ENCODE measurements at regions of chr10 and their contacts with region 1.

Region 1: DNA sequence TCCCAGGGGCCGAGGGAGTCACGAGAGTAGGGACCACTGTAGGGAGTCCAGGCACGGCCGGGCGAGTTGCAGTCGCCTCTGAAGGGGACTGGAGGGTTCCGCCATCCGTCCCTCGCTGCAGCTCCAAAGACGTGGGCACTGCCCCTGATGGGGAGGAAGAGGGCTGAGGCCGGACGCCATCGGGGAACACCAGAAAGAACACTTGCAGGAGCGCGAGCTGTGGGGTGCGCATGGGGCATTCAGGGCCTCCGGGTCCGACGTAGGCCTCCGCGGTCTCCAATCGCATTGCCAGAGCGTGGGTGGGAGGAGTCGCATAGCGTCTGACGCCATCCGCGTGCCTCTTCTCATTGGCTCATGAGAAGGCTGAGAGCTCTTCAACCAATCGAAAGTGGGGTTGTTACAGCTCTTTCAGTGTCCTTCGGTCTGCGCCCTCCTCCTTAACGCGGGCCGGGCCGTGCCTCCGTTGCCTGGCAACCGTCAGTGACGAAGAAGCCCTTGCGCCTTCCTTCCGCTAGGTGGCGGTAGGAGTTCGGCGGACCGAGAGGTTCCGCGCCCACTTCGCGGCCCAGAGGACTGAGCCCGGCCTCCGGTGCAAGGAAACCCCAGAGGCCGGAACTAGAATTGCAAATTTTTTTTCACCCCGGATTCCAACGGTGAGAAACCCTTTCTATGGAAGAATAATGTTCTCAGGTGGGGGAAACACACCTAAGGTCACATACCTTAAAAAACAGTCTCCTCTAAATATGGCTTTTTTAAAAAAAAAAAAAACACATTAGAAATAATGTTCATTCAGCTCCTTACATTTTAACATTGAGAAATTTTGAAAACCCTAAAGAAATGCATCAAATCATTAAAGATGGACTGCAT is at the start of gene TCTN3:
- DNase-seq: peak; percentile 97
- H3K4me3 ChIP-seq: peak within 1 kb of the TSS; percentile 72 to 89 (median 84)
- H3K27ac ChIP-seq: peak within 1 kb of the TSS; percentile 86 to 94 (median 88)
- H3K4me1 ChIP-seq: peaks cover 9 to 27% (median 11%) of the 10 kb centered on the region in 4 donors
- H3K27me3 ChIP-seq: no peaks in the 10 kb centered on the region
- CTCF ChIP-seq: peak; percentile 98 to 100 (median 99)
- EP300 ChIP-seq: no peak
- POLR2A ChIP-seq: peak; percentile 85
- total RNA-seq, gene TCTN3: 11.2 to 25.5 (median 20.7) TPM

Region 2: DNA sequence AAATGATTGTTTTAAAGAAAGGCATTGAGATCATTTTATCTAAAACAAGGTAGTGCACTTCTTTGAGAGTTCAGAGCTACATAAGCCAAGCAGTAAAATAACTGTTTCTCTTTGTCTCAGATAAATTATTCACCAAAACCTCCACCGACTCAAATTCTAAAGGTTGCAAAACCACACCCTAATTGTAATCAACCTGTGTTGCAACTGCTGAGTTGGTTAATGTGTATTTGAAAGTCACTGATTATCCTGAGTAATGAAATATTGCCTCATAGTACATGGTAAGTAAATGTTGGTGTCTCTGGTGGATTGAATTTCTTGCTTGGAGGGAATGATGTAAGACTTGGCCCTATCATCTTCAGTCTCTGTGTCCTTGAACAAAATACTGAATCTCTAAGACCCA is 791.3 kb before region 1 on chr10:
- in situ Hi-C with region 1: no loop called
- intact Hi-C with region 1: no loop called
- DNase-seq: no peak
- H3K4me3 ChIP-seq: no peak overlapping the region
- H3K27ac ChIP-seq: peak overlapping the region in 3 of 4 donors; percentile 32 to 52 (median 37)
- H3K4me1 ChIP-seq: peaks cover 0 to 5% (median 0%) of the 10 kb centered on the region in 4 donors
- H3K27me3 ChIP-seq: no peaks in the 10 kb centered on the region
- CTCF ChIP-seq: no peak
- EP300 ChIP-seq: no peak
- POLR2A ChIP-seq: no peak

Region 3: GRCh38 chr10:95706986-95707385 is 13.1 kb after region 1 on chr10:
- in situ Hi-C with region 1: no loop called
- intact Hi-C with region 1: no loop called
- DNase-seq: no peak
- H3K4me3 ChIP-seq: no peak overlapping the region
- H3K27ac ChIP-seq: no peak overlapping the region
- H3K4me1 ChIP-seq: no peaks in the 10 kb centered on the region
- H3K27me3 ChIP-seq: no peaks in the 10 kb centered on the region
- CTCF ChIP-seq: no peak
- EP300 ChIP-seq: no peak
- POLR2A ChIP-seq: no peak

Region 4: DNA sequence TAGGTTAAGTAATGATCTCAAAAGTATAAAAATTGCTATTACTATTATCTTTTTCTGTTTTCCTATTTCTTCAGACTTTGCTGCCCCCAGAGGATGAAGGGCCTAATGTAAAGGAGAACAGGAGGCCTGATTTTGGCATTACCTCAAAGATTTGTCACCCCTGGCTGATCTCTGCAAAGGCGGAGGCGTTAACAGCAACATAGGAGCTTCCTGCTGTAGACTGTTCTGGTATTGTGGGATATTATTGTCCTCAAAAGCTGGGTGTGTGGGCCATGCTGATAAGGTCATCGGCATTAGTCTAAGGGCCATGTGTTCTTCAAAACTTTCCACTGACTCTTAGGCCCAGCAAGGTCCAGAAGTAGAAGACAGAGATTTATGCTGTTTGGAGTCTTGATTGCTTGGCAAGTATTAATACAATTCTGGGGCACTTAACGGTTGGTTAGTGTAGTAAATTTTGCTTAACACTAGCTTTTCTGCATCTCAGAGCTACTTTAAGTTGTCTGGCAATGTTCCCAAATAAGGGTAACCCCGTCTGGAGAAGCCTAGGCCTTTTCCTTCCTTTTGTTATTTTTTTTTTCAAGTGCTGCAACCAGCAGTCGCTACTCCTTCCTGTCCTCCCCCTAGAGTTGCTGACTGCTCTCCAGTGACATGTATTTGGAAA is 48.0 kb after region 1 on chr10:
- in situ Hi-C with region 1: no loop called
- intact Hi-C with region 1: no loop called
- DNase-seq: peak; percentile 19
- H3K4me3 ChIP-seq: no peak overlapping the region
- H3K27ac ChIP-seq: peak overlapping the region; percentile 58 to 72 (median 70)
- H3K4me1 ChIP-seq: peaks cover 0 to 21% (median 18%) of the 10 kb centered on the region in 4 donors
- H3K27me3 ChIP-seq: no peaks in the 10 kb centered on the region
- CTCF ChIP-seq: peak in 2 of 5 experiments; percentile 5 to 12
- EP300 ChIP-seq: no peak
- POLR2A ChIP-seq: no peak

Region 5: DNA sequence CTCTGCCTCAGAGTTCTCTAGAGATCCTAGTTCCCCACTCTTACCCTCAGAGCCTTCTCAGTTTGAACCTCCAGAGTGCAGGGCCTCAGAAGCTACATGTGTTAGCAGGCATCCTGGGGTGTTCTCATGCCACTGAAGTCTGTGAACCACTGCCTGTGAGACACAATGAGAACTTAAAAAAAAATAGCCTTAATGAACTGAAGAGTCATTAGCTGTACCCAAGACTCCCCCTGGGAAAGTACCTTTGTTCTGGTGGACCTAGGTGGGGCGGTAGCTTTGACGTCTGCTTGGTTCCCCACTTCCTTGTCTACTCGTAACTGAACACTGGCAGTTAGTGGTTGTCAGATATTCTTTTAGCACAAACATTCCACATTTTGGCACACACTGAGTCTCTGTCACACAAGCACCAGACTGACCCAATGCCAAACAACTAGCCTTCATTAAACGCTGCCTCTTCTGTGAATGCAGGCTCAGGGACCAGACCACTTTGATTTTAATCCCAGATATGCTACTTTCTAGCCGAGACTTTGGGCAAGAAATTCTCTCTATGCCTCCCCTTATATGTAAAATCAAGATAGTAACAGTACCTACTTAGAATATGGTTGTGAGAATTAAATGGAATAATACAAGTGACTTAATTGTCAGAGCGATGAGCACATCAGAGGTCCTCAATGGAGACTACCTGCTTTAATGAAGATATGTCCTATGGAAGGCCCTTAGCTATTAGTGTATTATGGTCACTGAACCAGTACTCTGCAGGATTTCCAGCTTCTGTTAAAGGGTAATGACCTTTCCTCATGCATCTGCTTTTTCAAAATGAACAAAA is 138.5 kb after region 1 on chr10:
- in situ Hi-C with region 1: loop called in 1 of 4 experiments (anchors 10 kb)
- intact Hi-C with region 1: no loop called
- DNase-seq: peak; percentile 37
- H3K4me3 ChIP-seq: no peak overlapping the region
- H3K27ac ChIP-seq: peak overlapping the region; percentile 28 to 65 (median 46)
- H3K4me1 ChIP-seq: peaks cover 0 to 34% (median 11%) of the 10 kb centered on the region in 4 donors
- H3K27me3 ChIP-seq: no peaks in the 10 kb centered on the region
- CTCF ChIP-seq: no peak
- EP300 ChIP-seq: no peak
- POLR2A ChIP-seq: peak; percentile 39

Region 6: DNA sequence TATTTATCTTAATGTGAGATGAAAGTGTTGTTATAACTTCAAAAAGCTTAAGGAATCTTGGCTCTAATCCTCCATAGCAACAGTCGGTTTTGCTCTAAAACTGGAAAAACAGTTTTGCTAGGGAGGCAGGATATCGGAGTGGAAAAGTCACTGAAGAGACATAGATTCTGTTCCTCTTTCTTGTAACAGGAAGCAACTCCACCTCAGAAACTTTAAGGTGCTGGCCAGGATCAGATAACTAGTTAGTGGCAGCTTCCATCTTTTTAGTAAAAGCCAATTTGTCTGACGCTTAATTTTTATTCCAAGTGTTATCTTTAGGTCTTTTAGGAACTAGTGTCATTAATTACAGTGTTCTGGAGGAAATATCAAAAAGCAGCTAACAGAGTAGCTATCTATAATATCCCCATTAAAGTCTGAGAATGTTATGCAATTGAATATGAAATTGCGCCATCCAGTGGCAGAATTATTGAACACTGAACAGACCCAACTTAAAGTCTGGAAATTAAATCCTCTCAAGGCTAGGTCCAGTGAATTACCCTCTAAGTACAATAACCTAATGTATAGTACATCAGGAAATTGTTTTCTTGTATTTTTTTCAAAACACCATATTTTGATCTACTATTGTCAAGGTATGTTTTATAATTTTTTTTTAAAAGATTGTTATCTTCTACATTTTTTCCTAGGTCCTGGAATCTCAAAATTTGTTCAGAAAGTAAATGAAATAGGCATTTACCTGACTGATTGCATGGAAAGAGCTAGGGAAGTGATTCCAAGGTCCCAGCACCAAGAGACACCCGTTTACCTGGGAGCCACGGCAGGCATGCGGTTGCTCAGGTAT is 148.0 kb after region 1 on chr10:
- in situ Hi-C with region 1: loop called (anchors 5 to 10 kb)
- intact Hi-C with region 1: loop called (anchors 2 kb)
- DNase-seq: peak; percentile 44
- H3K4me3 ChIP-seq: no peak overlapping the region
- H3K27ac ChIP-seq: peak overlapping the region; percentile 30 to 56 (median 42)
- H3K4me1 ChIP-seq: peaks cover 3 to 31% (median 11%) of the 10 kb centered on the region in 4 donors
- H3K27me3 ChIP-seq: no peaks in the 10 kb centered on the region
- CTCF ChIP-seq: peak; percentile 65 to 84 (median 73)
- EP300 ChIP-seq: no peak
- POLR2A ChIP-seq: no peak

Measured in transverse colon (tissue), 4 donors.